ENCODE measurements at regions of chr14 and their contacts with region 1.

Region 1: DNA sequence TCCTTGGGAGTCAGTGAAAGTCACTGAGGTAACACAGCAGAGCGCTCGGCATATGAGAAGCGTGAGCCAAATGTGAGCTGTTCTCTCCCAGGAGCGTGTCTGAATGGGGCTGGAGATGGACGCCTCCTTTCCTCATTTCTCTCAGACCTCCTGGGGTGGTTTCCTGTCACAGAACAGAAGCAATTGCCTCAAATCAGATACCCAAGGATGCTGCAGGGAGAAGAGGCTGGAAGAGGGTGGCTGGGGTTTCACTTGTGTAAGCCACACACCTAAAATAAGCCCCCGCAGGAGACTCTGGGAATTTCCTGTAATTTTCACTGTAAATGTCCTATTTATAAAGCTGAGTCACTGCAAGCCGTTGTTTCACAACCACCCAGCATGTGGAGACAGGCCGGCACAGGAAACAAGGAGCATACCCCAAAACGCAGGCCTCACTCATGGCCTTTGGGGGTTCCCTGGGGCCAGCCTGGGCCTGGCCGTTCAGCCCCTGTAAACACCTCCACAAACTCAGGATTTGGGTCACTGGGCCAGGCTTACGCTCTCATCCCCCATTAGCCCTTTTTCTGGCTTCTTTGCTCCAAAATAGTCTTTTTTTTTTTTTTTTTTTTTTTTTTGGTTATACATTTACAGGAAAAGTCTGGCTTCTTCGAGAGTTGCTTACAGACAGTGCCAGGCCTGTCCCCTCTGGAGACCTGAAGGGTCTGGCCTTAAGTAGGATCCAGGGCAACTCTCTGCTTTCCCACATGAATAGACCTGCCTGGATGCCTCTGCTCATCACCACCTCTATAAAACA is 55.3 kb downstream of the VCPKMT start:
- DNase-seq: peak; percentile 81
- ATAC-seq: peak; percentile 25
- H3K4me3 Mint-ChIP-seq: peak overlapping the region; percentile 92
- H3K27ac Mint-ChIP-seq: peak overlapping the region; percentile 100
- H3K4me1 Mint-ChIP-seq: peaks cover 82% of the 10 kb centered on the region
- H3K27me3 Mint-ChIP-seq: no peaks in the 10 kb centered on the region

Region 2: GRCh38 chr14:49862089-49862673 is 198.9 kb before region 1 on chr14:
- CTCF ChIA-PET with region 1: interaction called, 59 read pairs
- DNase-seq: peak; percentile 93
- ATAC-seq: peak; percentile 10
- H3K4me3 Mint-ChIP-seq: no peak overlapping the region
- H3K27ac Mint-ChIP-seq: no peak overlapping the region
- H3K4me1 Mint-ChIP-seq: peaks cover 32% of the 10 kb centered on the region
- H3K27me3 Mint-ChIP-seq: no peaks in the 10 kb centered on the region

Region 3: GRCh38 chr14:49892636-49893308 is 168.3 kb before region 1 on chr14 and contains the start of gene ARF6:
- CTCF ChIA-PET with region 1: interaction called, 15 read pairs
- DNase-seq: peak; percentile 99
- ATAC-seq: peak; percentile 91
- H3K4me3 Mint-ChIP-seq: peak within 1 kb of the TSS; percentile 94
- H3K27ac Mint-ChIP-seq: peak within 1 kb of the TSS; percentile 99
- H3K4me1 Mint-ChIP-seq: peaks cover 18% of the 10 kb centered on the region
- H3K27me3 Mint-ChIP-seq: no peaks in the 10 kb centered on the region
- total RNA-seq, gene ARF6: 171 to 190 TPM

Region 4: DNA sequence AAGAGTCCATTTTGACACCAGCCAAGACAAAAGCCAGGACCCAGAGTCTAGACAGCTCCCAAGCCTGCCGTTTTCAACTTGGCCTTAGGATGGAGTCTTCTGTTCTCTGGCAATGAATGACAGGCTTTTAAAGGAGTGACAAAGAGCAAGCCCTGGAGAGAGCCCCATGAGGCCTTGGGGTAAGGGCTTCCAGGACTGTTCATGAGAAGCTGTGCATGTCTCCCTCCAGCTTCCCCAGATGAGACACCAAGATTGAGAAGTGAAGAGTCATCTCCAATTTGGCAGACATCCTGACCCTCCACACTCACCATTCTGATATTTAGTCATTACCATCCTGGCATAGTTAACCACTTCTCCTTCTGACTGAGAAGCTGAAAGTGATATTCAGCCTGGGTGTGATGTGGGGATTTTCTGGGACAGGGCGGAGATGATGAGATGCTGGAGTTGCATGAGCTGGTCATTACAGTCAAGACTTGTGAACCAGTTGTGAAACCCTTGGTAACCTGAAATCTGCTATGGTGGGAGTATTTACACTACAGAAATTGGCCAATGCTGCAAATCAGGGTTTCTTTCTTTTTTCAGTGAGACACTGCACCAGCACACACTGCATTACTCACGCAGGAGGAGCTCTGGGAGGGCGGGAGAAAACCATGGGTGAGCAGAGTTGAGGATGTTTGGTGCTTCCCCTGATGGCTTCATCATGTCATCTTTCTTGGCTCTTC is 22.5 kb before region 1 on chr14:
- CTCF ChIA-PET with region 1: interaction called, 32 read pairs
- DNase-seq: peak; percentile 86
- ATAC-seq: peak; percentile 74
- H3K4me3 Mint-ChIP-seq: peak overlapping the region; percentile 78
- H3K27ac Mint-ChIP-seq: peak overlapping the region; percentile 98
- H3K4me1 Mint-ChIP-seq: peaks cover 78% of the 10 kb centered on the region
- H3K27me3 Mint-ChIP-seq: no peaks in the 10 kb centered on the region

Region 5: GRCh38 chr14:50085570-50086320 is 24.7 kb after region 1 on chr14:
- CTCF ChIA-PET with region 1: interaction called, 39 read pairs
- DNase-seq: peak; percentile 56
- ATAC-seq: no peak
- H3K4me3 Mint-ChIP-seq: peak overlapping the region; percentile 52
- H3K27ac Mint-ChIP-seq: peak overlapping the region; percentile 95
- H3K4me1 Mint-ChIP-seq: peaks cover 91% of the 10 kb centered on the region
- H3K27me3 Mint-ChIP-seq: no peaks in the 10 kb centered on the region

Region 6: GRCh38 chr14:50285861-50286260 is 224.8 kb after region 1 on chr14:
- CTCF ChIA-PET with region 1: no interaction called
- DNase-seq: no peak
- ATAC-seq: no peak
- H3K4me3 Mint-ChIP-seq: no peak overlapping the region
- H3K27ac Mint-ChIP-seq: no peak overlapping the region
- H3K4me1 Mint-ChIP-seq: no peaks in the 10 kb centered on the region
- H3K27me3 Mint-ChIP-seq: no peaks in the 10 kb centered on the region